HEK293 (cell line): ENCODE measurements at regions of chr7 and their contacts with region 1.

Region 1: GRCh38 chr7:43260980-43261878 is 148.8 kb downstream of the HECW1 start:
- H3K4me3 ChIP-seq: no peak overlapping the region
- H3K27ac ChIP-seq: no peak overlapping the region
- H3K4me1 ChIP-seq: no peaks in the 10 kb centered on the region
- CTCF ChIP-seq: peak; percentile 67

Region 2: GRCh38 chr7:42940985-42941847 is 320.0 kb before region 1 on chr7:
- CTCF ChIA-PET with region 1: interaction called, 32 read pairs
- POLR2A ChIA-PET with region 1: no interaction called
- H3K4me3 ChIP-seq: no peak overlapping the region
- H3K27ac ChIP-seq: no peak overlapping the region
- H3K4me1 ChIP-seq: no peaks in the 10 kb centered on the region
- CTCF ChIP-seq: peak; percentile 70

Region 3: GRCh38 chr7:42986781-42987248 is 274.4 kb before region 1 on chr7:
- CTCF ChIA-PET with region 1: no interaction called
- POLR2A ChIA-PET with region 1: no interaction called
- H3K4me3 ChIP-seq: no peak overlapping the region
- H3K27ac ChIP-seq: no peak overlapping the region
- H3K4me1 ChIP-seq: no peaks in the 10 kb centered on the region
- CTCF ChIP-seq: no peak

Region 4: DNA sequence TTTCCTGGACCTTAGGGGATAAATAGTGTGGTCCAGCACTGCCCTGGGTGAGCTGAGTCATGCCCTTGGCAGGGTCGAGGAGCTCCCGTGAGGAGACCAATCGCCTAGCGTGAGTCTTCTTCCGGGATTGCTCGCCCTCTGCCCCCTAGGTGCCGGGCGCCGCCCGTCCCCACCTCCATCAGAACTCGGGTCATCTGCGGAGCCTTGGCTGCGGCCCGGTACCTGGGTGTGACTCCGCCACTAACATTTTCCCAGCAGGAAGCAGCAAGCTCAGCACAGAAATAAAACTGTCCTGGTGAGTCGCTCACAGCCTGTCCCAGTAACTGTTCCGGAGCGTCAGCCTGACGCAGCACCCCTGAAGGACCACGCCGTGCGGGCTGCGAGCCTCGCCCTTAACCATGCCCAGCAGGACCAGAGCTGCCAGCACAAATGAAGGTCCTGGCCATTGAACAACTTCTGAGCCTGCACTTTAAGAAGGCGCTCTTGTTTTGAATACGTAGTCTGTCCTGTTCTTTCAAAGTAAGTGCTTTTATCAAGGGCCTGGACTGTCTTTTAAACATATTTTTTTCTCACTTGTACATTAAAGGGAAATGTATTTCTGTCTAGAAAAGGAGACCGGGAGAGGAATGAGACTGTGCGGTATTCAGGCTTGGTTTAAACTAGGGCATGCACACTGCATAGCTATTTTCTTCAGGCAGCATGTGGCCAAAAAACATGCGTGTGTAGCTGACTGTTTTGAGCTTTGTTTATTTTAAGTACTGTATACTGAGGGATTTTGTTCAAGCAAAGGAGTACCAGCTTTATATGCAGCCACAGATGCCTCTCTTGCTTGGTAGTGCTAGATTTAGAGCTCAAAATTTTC is 12.0 kb before region 1 on chr7:
- CTCF ChIA-PET with region 1: interaction called, 18 read pairs
- POLR2A ChIA-PET with region 1: interaction called, 3 read pairs
- H3K4me3 ChIP-seq: no peak overlapping the region
- H3K27ac ChIP-seq: no peak overlapping the region
- H3K4me1 ChIP-seq: no peaks in the 10 kb centered on the region
- CTCF ChIP-seq: no peak

Region 5: GRCh38 chr7:43439631-43440401 is 178.6 kb after region 1 on chr7:
- CTCF ChIA-PET with region 1: interaction called, 11 read pairs
- POLR2A ChIA-PET with region 1: no interaction called
- H3K4me3 ChIP-seq: no peak overlapping the region
- H3K27ac ChIP-seq: no peak overlapping the region
- H3K4me1 ChIP-seq: no peaks in the 10 kb centered on the region
- CTCF ChIP-seq: peak; percentile 45; the same call in 1 of the 2 replicates